ENCODE measurements at regions of chr1 and their contacts with region 1.

Region 1: DNA sequence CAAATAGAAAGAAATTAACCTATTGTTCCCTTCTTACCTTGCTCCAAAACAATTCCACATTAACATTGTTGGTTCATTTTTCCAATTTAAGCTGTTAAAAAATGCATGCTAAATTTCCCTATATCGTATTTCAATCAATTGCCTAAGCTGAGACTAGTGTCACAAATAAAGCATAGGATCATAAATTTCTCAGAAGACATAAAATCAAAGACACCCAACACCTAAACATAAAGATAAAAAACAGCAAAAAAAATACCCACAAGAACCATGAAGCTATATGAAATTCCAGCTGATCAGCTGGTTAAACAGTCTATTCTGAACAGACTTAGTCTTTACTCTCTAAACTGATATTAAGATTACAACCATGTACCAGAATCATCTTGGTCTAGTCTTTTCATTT is 32.3 kb downstream of the ACBD6 start:
- DNase-seq: no peak
- ATAC-seq: no peak
- H3K4me3 ChIP-seq: no peak overlapping the region
- H3K27ac ChIP-seq: no peak overlapping the region
- H3K4me1 ChIP-seq: no peaks in the 10 kb centered on the region
- H3K27me3 ChIP-seq: no peaks in the 10 kb centered on the region
- CTCF ChIP-seq: no peak

Region 2: DNA sequence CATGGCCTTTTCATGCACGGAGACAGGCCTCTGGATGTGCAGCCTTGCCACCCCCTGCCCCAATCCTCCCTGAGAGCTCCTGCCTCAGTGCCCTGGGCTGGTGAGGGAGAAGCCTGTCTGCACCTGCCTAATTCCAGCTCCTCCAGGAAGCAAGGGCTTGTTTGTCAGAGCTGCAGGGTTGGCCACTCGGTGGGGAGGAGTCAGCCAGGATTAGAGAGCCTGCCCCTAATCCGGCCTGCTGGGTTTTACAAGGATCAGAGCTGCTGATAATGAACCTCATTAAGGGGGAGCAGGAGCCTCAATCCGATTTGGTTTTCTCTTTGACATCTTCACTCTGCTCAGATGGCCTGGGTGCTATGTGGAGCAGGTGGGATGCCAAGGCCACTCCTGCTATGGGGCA is 271.8 kb before region 1 on chr1:
- intact Hi-C with region 1: loop called in 1 of 3 experiments (anchors 10 kb)
- DNase-seq: no peak
- ATAC-seq: peak in 1 of 4 donors; percentile 6
- H3K4me3 ChIP-seq: no peak overlapping the region
- H3K27ac ChIP-seq: no peak overlapping the region
- H3K4me1 ChIP-seq: no peaks in the 10 kb centered on the region
- H3K27me3 ChIP-seq: no peaks in the 10 kb centered on the region
- CTCF ChIP-seq: no peak

Region 3: DNA sequence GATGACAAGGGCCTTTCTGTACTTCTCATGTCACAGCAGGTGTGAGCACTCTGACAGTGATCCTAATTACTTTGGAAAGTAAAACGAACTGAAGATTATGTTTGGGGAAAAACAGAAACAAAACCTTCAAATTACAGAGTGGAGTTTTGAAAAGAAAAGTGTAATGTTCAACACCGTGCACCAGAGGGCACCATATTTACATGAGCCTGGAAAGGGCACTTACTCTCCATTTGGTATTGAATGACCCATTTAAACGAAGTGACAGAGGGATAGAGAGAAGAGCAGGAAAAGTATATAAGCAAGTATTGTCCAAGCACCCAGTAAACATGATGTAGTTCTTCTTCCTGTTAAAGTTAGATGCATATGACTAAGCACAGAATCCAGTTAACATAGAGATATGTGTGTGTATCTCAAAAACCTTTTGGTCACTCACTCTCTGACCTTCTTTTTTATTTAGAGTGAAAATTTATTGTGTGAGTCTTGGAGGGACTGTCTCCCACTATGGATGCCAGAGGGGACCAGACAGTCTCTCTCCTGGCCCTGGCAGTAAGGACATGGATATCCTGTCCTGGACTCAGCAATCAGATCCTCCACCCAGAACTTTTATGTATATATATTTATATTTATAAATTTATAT is 1976.1 kb after region 1 on chr1:
- intact Hi-C with region 1: no loop called
- DNase-seq: peak in 1 of 6 donors; percentile 18
- ATAC-seq: peak in 3 of 4 donors; percentile 83 to 90 (median 88)
- H3K4me3 ChIP-seq: no peak overlapping the region
- H3K27ac ChIP-seq: no peak overlapping the region
- H3K4me1 ChIP-seq: no peaks in the 10 kb centered on the region
- H3K27me3 ChIP-seq: no peaks in the 10 kb centered on the region
- CTCF ChIP-seq: peak in 3 of 4 donors; percentile 34 to 47 (median 40)